ENCODE measurements at regions of chr15 and their contacts with region 1.

Region 1: GRCh38 chr15:41660235-41661077 is at the start of gene MGA:
- DNase-seq: peak; percentile 84
- H3K4me3 Mint-ChIP-seq: peak within 1 kb of the TSS; percentile 95
- H3K27ac Mint-ChIP-seq: peak within 1 kb of the TSS; percentile 81
- H3K4me1 Mint-ChIP-seq: peaks cover 32% of the 10 kb centered on the region
- H3K27me3 Mint-ChIP-seq: peaks cover 2% of the 10 kb centered on the region
- total RNA-seq, gene MGA: 27.4 to 28.3 TPM

Region 2: GRCh38 chr15:41621200-41622193 is 39.0 kb before region 1 on chr15:
- CTCF ChIA-PET with region 1: no interaction called
- intact Hi-C with region 1: loop called (anchors 1 kb)
- DNase-seq: peak; percentile 84
- H3K4me3 Mint-ChIP-seq: peak overlapping the region; percentile 73
- H3K27ac Mint-ChIP-seq: no peak overlapping the region
- H3K4me1 Mint-ChIP-seq: peaks cover 9% of the 10 kb centered on the region
- H3K27me3 Mint-ChIP-seq: no peaks in the 10 kb centered on the region

Region 3: GRCh38 chr15:41695750-41696426 is 35.4 kb after region 1 on chr15:
- CTCF ChIA-PET with region 1: interaction called, 3 read pairs
- intact Hi-C with region 1: loop called (anchors 1 kb)
- DNase-seq: peak; percentile 78
- H3K4me3 Mint-ChIP-seq: peak overlapping the region; percentile 22
- H3K27ac Mint-ChIP-seq: peak overlapping the region; percentile 76
- H3K4me1 Mint-ChIP-seq: peaks cover 48% of the 10 kb centered on the region
- H3K27me3 Mint-ChIP-seq: no peaks in the 10 kb centered on the region

Region 4: GRCh38 chr15:41820791-41821423 is 160.5 kb after region 1 on chr15:
- CTCF ChIA-PET with region 1: no interaction called
- intact Hi-C with region 1: no loop called
- DNase-seq: no peak
- H3K4me3 Mint-ChIP-seq: no peak overlapping the region
- H3K27ac Mint-ChIP-seq: no peak overlapping the region
- H3K4me1 Mint-ChIP-seq: no peaks in the 10 kb centered on the region
- H3K27me3 Mint-ChIP-seq: no peaks in the 10 kb centered on the region

Measured in activated naive CD4-positive, alpha-beta T cell treated with anti-CD3 and anti-CD28 coated beads for 36 hours (primary cell).